ENCODE measurements at regions of chr18 and their contacts with region 1.

Region 1: DNA sequence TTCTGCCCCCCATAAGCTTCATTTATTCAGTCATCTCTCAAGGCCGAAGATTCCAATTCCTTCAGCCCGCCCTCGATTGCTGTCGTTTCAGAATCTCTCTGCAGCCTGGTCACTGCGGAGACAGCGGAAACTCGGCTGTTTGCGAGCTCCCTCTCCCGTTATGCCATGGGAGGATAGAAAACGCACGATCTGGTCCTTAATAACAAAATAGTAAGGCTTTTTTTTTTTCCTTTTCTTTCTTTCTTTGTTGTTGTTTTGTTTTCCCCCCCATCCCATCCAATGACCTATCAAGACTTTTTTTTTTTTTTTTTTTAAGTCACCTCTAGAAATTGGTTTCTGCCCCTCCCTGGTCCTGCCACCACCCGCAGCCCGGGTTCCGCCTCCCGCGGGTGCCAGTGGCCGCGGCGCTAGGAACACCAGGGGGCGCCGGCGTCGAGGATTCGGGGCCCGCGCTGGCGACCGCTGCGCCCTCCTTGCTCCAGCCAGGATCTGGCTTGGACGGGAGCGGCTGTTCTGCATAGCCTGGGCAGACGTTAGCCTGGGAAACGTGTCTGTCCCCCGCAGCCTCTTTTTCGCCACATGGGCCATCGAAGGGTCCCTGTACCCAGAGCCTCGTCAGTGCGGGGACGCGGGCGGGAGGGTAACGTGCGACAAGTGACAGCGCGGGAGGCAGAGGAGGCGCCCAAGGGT is 10.1 kb downstream of the CPLX4 start:
- DNase-seq: peak; percentile 34 to 73
- H3K4me3 ChIP-seq: peak overlapping the region; percentile 23; the same call in 1 of the 2 replicates
- H3K4me3 Mint-ChIP-seq: no peak overlapping the region
- H3K27ac Mint-ChIP-seq: no peak overlapping the region
- H3K4me1 ChIP-seq: no peaks in the 10 kb centered on the region
- H3K4me1 Mint-ChIP-seq: no peaks in the 10 kb centered on the region
- H3K27me3 ChIP-seq: no peaks in the 10 kb centered on the region
- H3K27me3 Mint-ChIP-seq: peaks cover 15% of the 10 kb centered on the region
- CTCF ChIP-seq: peak; percentile 45 to 67

Region 2: DNA sequence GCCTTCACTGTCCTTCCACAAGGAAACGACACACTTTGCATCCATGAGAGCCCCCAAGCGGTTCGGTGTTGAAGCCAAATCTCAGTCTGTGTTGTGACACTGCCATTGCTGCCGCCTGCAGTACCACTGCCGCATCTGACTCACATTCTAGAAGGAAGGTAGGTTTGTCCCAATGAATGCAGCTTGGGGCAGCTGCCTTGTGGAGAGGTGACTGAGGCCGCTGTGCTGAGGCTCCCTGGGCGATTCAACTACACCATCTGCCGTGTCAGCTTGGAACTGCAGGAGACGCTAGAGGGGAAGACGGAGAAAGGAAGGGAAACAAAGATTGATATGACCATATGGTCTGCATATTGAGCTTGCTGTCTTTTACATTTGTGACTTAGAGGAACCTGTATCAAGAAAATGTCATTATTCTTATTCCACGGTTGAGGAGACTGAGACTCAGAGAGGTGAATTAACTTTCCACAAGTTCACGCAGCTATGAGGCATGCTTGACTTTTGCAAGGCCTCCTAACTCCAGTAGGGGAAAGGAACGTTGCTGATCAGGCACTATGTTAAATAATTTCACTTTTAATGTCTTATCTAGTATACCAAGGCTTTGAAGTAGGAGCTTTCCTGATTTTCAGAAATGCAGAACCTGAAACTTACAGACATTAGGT is 94.2 kb after region 1 on chr18:
- CTCF ChIA-PET with region 1: interaction called, 7 read pairs
- POLR2A ChIA-PET with region 1: no interaction called
- intact Hi-C with region 1: loop called (anchors 2 kb)
- DNase-seq: peak; percentile 43 to 58
- H3K4me3 ChIP-seq: no peak overlapping the region
- H3K4me3 Mint-ChIP-seq: no peak overlapping the region
- H3K27ac Mint-ChIP-seq: no peak overlapping the region
- H3K4me1 ChIP-seq: no peaks in the 10 kb centered on the region
- H3K4me1 Mint-ChIP-seq: no peaks in the 10 kb centered on the region
- H3K27me3 ChIP-seq: no peaks in the 10 kb centered on the region
- H3K27me3 Mint-ChIP-seq: no peaks in the 10 kb centered on the region
- CTCF ChIP-seq: peak; percentile 37 to 47

Measured in Caco-2 (cell line).